MCF 10A (cell line): ENCODE measurements at regions of chr15 and their contacts with region 1.

Region 1: DNA sequence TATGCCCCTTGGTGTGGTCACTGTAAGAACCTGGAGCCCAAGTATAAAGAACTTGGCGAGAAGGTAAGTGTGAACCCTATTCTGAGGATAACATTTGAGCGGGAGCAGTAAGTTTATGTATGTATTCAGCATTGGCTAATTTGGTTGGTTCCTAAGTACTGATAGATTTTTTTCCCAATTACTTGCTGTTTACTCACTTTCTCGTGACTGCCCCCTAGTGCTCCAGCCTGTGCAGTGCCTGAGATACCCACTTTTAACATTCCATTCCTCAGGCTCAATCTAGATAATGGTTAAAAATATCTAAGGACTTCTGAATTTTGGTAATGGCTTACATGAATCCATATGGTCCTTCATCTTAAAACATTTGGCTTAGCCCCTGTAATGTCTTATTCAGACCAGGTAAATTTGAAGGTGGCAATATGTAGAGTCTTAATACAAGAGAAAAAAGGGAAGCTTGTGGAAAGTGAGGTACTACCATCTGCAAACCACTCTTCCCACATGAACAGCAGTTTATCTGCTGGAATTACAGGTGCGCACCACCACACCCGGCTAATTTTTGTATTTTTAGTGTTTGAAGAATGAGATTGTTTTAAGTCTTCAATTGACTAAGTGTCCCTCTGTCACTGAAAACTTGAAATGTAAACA is 7.1 kb downstream of the ELL3 start:
- DNase-seq: peak; percentile 66
- H3K4me3 Mint-ChIP-seq: no peak overlapping the region
- H3K27ac Mint-ChIP-seq: no peak overlapping the region
- H3K4me1 Mint-ChIP-seq: peaks cover 6% of the 10 kb centered on the region
- H3K27me3 Mint-ChIP-seq: no peaks in the 10 kb centered on the region
- CTCF ChIP-seq: peak; percentile 72

Region 2: DNA sequence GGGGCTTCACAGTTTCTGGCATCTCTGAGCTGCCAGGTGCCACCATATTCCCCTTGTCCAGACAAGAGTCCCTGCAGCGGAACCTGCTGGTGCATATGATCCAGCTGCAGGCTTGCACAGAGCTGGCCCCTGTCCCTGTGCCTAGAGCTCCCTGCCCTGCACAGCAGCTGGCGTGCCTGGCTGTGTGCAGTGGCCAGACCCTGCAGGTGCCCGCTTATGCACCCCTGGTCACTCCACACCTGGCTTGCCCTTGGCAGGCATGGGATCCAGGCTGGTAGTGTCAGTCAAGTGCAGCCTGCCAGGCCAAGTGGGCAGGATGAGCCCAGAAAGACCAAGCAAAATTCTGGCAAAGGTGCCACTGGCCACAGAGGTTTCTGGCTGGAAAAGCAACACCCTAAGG is 760.5 kb before region 1 on chr15:
- CTCF ChIA-PET with region 1: no interaction called
- POLR2A ChIA-PET with region 1: no interaction called
- intact Hi-C with region 1: no loop called
- DNase-seq: no peak
- H3K4me3 Mint-ChIP-seq: no peak overlapping the region
- H3K27ac Mint-ChIP-seq: no peak overlapping the region
- H3K4me1 Mint-ChIP-seq: no peaks in the 10 kb centered on the region
- H3K27me3 Mint-ChIP-seq: no peaks in the 10 kb centered on the region
- CTCF ChIP-seq: no peak

Region 3: GRCh38 chr15:43749690-43750345 is 19.9 kb before region 1 on chr15:
- CTCF ChIA-PET with region 1: interaction called, 6 read pairs
- POLR2A ChIA-PET with region 1: interaction called, 22 read pairs
- intact Hi-C with region 1: no loop called
- DNase-seq: peak; percentile 4
- H3K4me3 Mint-ChIP-seq: no peak overlapping the region
- H3K27ac Mint-ChIP-seq: no peak overlapping the region
- H3K4me1 Mint-ChIP-seq: peaks cover 14% of the 10 kb centered on the region
- H3K27me3 Mint-ChIP-seq: no peaks in the 10 kb centered on the region
- CTCF ChIP-seq: no peak

Region 4: GRCh38 chr15:43791993-43792760 is 22.5 kb after region 1 on chr15 and contains the start of gene SERF2:
- CTCF ChIA-PET with region 1: interaction called, 40 read pairs
- POLR2A ChIA-PET with region 1: interaction called, 162 read pairs
- intact Hi-C with region 1: no loop called
- DNase-seq: peak; percentile 99
- H3K4me3 Mint-ChIP-seq: peak within 1 kb of the TSS; percentile 95
- H3K27ac Mint-ChIP-seq: peak within 1 kb of the TSS; percentile 94
- H3K4me1 Mint-ChIP-seq: peaks cover 14% of the 10 kb centered on the region
- H3K27me3 Mint-ChIP-seq: no peaks in the 10 kb centered on the region
- CTCF ChIP-seq: no peak
- total RNA-seq, gene SERF2: 697 and 717 TPM in 2 replicates

Region 5: GRCh38 chr15:44058126-44058525 is 288.4 kb after region 1 on chr15:
- CTCF ChIA-PET with region 1: no interaction called
- POLR2A ChIA-PET with region 1: no interaction called
- intact Hi-C with region 1: no loop called
- DNase-seq: no peak
- H3K4me3 Mint-ChIP-seq: no peak overlapping the region
- H3K27ac Mint-ChIP-seq: no peak overlapping the region
- H3K4me1 Mint-ChIP-seq: no peaks in the 10 kb centered on the region
- H3K27me3 Mint-ChIP-seq: no peaks in the 10 kb centered on the region
- CTCF ChIP-seq: no peak